CD8-positive, alpha-beta T cell (primary cell): ENCODE measurements at regions of chr10 and their contacts with region 1.

Region 1: DNA sequence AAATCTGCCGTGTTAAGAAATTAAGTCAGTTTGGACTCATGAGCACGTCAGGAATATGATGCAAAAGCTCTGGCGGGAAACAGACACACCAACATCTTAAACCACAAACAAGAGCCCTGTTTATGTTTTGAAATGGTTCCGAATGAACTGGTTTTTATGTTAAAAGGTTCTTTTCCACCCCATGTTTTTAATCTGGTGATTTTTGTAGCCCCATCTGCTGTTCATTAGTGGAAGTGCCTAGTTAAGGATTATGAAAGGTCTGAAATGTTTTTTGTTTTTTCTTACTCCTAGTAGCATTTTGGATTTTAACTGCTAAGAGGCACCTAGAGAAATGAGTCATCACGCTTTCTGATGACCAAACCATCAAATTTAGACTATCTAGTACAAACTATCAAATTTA is 404.1 kb upstream of the MKI67 start:
- DNase-seq: no peak
- ATAC-seq: no peak
- H3K4me3 ChIP-seq: no peak overlapping the region
- H3K4me3 Mint-ChIP-seq: no peak overlapping the region
- H3K27ac ChIP-seq: no peak overlapping the region
- H3K27ac Mint-ChIP-seq: no peak overlapping the region
- H3K4me1 ChIP-seq: no peaks in the 10 kb centered on the region
- H3K4me1 Mint-ChIP-seq: no peaks in the 10 kb centered on the region
- H3K27me3 ChIP-seq: peaks cover 0 to 4% of the 10 kb centered on the region in 2 experiments
- H3K27me3 Mint-ChIP-seq: peaks cover 24% of the 10 kb centered on the region
- CTCF ChIP-seq: no peak

Region 2: DNA sequence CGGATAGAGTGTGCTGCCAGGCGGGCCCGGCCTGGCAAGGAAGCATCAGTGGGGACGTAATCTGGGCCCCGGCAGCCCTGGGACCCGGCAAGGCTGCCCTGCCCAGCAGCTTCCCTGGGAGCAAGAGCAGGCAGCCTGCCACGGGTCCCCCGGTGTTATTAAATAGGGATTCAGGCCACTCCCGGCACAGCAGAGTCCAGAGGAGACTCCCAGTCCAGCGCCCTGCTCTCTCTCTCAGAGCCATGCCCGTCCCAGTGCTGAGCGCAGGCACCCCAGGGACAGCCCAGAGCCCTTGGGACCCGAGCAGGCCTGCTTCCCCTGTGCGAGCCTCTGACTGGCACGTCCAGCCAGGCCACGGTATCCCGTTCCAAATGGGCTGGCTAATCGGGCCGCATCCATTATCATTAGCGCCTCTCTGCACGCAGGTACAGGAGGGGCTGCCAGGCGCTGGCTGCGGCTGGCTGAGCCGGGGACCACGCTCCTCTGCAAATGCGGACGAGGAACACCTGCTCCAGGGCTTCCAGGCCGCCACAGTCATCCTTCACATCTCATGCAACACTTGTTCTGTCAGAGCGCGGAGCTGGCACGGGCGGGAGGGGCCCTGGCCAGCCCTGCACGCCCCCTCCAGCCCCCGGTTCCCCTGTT is 59.9 kb before region 1 on chr10:
- CTCF ChIA-PET with region 1: no interaction called
- POLR2A ChIA-PET with region 1: no interaction called
- intact Hi-C with region 1: loop called in 1 of 2 experiments (anchors 10 kb)
- DNase-seq: no peak
- ATAC-seq: no peak
- H3K4me3 ChIP-seq: no peak overlapping the region
- H3K4me3 Mint-ChIP-seq: no peak overlapping the region
- H3K27ac ChIP-seq: no peak overlapping the region
- H3K27ac Mint-ChIP-seq: no peak overlapping the region
- H3K4me1 ChIP-seq: no peaks in the 10 kb centered on the region
- H3K4me1 Mint-ChIP-seq: no peaks in the 10 kb centered on the region
- H3K27me3 ChIP-seq: peaks cover 0 to 3% of the 10 kb centered on the region in 2 experiments
- H3K27me3 Mint-ChIP-seq: no peaks in the 10 kb centered on the region
- CTCF ChIP-seq: no peak